Gastrocnemius medialis (tissue), 4 donors: ENCODE measurements at regions of chr9 and their contacts with region 1.

Region 1: GRCh38 chr9:96327694-96328352 is 25.8 kb upstream of the HSD17B3 start:
- DNase-seq: no peak
- ATAC-seq: peak in 1 of 2 donors; percentile 70
- H3K4me3 ChIP-seq: no peak overlapping the region
- H3K27ac ChIP-seq: no peak overlapping the region
- H3K4me1 ChIP-seq: no peaks in the 10 kb centered on the region
- H3K27me3 ChIP-seq: no peaks in the 10 kb centered on the region
- CTCF ChIP-seq: peak; percentile 41 to 80 (median 64)
- POLR2A ChIP-seq: no peak

Region 2: DNA sequence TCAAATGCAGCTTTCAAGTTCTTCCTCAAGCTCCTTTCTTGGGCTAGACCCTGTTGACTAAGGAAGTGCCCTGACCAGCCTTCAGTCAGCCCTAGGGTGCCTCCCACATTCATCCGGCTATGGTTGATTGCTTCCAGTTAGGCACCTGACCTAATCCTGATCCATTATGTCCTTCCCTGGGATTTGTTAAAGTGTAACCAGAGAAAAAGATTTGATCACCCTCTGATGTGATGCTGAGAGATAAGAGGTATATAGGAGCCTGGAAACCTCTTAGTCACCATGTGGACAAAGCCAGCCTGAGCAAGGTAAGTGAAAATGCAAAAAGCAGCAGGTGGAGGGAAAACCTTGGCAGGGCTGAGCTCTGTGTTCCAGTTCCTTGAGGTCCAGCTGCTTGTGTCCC is 631.1 kb before region 1 on chr9:
- in situ Hi-C with region 1: no loop called
- intact Hi-C with region 1: no loop called
- DNase-seq: no peak
- ATAC-seq: no peak
- H3K4me3 ChIP-seq: no peak overlapping the region
- H3K27ac ChIP-seq: no peak overlapping the region
- H3K4me1 ChIP-seq: no peaks in the 10 kb centered on the region
- H3K27me3 ChIP-seq: peaks cover 0 to 4% (median 0%) of the 10 kb centered on the region in 3 donors
- CTCF ChIP-seq: no peak
- POLR2A ChIP-seq: no peak

Region 3: GRCh38 chr9:96566498-96567207 is 238.8 kb after region 1 on chr9:
- in situ Hi-C with region 1: no loop called
- intact Hi-C with region 1: loop called (anchors 10 kb)
- DNase-seq: peak; percentile 45 to 60
- ATAC-seq: peak; percentile 82 to 91
- H3K4me3 ChIP-seq: peak overlapping the region; percentile 65 to 81 (median 77)
- H3K27ac ChIP-seq: peak overlapping the region; percentile 69 to 84 (median 75)
- H3K4me1 ChIP-seq: peaks cover 0 to 11% of the 10 kb centered on the region in 2 donors
- H3K27me3 ChIP-seq: no peaks in the 10 kb centered on the region
- CTCF ChIP-seq: peak; percentile 31 to 77 (median 62)
- POLR2A ChIP-seq: peak in 1 of 2 donors; percentile 12

Region 4: GRCh38 chr9:96661711-96662110 is 333.9 kb after region 1 on chr9:
- in situ Hi-C with region 1: loop called in 3 of 4 experiments (anchors 5 to 25 kb)
- intact Hi-C with region 1: loop called (anchors 5 kb)
- DNase-seq: no peak
- ATAC-seq: no peak
- H3K4me3 ChIP-seq: no peak overlapping the region
- H3K27ac ChIP-seq: no peak overlapping the region
- H3K4me1 ChIP-seq: no peaks in the 10 kb centered on the region
- H3K27me3 ChIP-seq: no peaks in the 10 kb centered on the region
- CTCF ChIP-seq: no peak
- POLR2A ChIP-seq: no peak

Region 5: GRCh38 chr9:96667361-96667728 is 339.5 kb after region 1 on chr9:
- in situ Hi-C with region 1: loop called in 3 of 4 experiments (anchors 5 to 25 kb)
- intact Hi-C with region 1: loop called (anchors 5 kb)
- DNase-seq: no peak
- ATAC-seq: no peak
- H3K4me3 ChIP-seq: no peak overlapping the region
- H3K27ac ChIP-seq: no peak overlapping the region
- H3K4me1 ChIP-seq: no peaks in the 10 kb centered on the region
- H3K27me3 ChIP-seq: no peaks in the 10 kb centered on the region
- CTCF ChIP-seq: no peak
- POLR2A ChIP-seq: no peak